ENCODE measurements at regions of chr10 and their contacts with region 1.

Region 1: GRCh38 chr10:63157845-63158624 is 24.9 kb downstream of the NRBF2 start:
- DNase-seq: peak; percentile 69
- H3K4me3 ChIP-seq: no peak overlapping the region
- H3K27ac ChIP-seq: no peak overlapping the region
- H3K4me1 ChIP-seq: no peaks in the 10 kb centered on the region
- H3K27me3 ChIP-seq: no peaks in the 10 kb centered on the region
- CTCF ChIP-seq: peak; percentile 51 to 78

Region 2: GRCh38 chr10:62492012-62492869 is 665.8 kb before region 1 on chr10:
- CTCF ChIA-PET with region 1: no interaction called
- dilution Hi-C with region 1: no loop called
- in situ Hi-C with region 1: no loop called
- intact Hi-C with region 1: loop called (anchors 5 kb)
- DNase-seq: peak; percentile 72
- H3K4me3 ChIP-seq: no peak overlapping the region
- H3K27ac ChIP-seq: peak overlapping the region; percentile 55
- H3K4me1 ChIP-seq: peaks cover 10% of the 10 kb centered on the region
- H3K27me3 ChIP-seq: no peaks in the 10 kb centered on the region
- CTCF ChIP-seq: peak; percentile 80 to 87

Region 3: DNA sequence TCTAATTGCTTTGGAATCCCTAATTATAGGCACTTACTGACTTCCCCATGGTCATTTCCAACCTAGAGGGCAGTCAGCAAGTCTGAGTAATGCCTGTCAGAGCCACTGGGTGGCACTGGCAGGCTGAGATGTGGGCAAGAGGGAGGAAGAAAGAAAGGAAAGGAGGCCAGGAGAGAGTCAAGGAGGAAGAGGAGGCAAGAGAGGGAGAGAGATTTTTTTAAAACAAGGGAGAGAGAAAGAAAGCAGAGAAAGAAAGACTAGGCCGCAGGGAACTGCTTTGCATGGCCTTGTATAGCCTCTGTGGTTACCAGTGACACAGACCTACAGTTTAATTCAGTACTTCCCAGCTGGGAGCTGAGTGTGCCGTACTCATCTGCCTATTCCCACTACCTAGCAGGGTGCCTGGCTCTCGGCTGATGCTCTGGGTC is 563.9 kb before region 1 on chr10:
- CTCF ChIA-PET with region 1: no interaction called
- dilution Hi-C with region 1: no loop called
- in situ Hi-C with region 1: no loop called
- intact Hi-C with region 1: loop called (anchors 1 kb)
- DNase-seq: peak; percentile 51
- H3K4me3 ChIP-seq: no peak overlapping the region
- H3K27ac ChIP-seq: no peak overlapping the region
- H3K4me1 ChIP-seq: peaks cover 4% of the 10 kb centered on the region
- H3K27me3 ChIP-seq: no peaks in the 10 kb centered on the region
- CTCF ChIP-seq: peak; percentile 92 to 96

Region 4: GRCh38 chr10:62816331-62817120 is 341.5 kb before region 1 on chr10 and contains the start of gene EGR2:
- CTCF ChIA-PET with region 1: no interaction called
- dilution Hi-C with region 1: no loop called
- in situ Hi-C with region 1: no loop called
- intact Hi-C with region 1: loop called (anchors 2 kb)
- DNase-seq: peak; percentile 93
- H3K4me3 ChIP-seq: peak within 1 kb of the TSS; percentile 63 to 73 (median 66)
- H3K27ac ChIP-seq: peak within 1 kb of the TSS; percentile 70
- H3K4me1 ChIP-seq: peaks cover 35% of the 10 kb centered on the region
- H3K27me3 ChIP-seq: peaks cover 8% of the 10 kb centered on the region
- CTCF ChIP-seq: no peak
- total RNA-seq, gene EGR2: 0.64 to 1.2 TPM

Region 5: DNA sequence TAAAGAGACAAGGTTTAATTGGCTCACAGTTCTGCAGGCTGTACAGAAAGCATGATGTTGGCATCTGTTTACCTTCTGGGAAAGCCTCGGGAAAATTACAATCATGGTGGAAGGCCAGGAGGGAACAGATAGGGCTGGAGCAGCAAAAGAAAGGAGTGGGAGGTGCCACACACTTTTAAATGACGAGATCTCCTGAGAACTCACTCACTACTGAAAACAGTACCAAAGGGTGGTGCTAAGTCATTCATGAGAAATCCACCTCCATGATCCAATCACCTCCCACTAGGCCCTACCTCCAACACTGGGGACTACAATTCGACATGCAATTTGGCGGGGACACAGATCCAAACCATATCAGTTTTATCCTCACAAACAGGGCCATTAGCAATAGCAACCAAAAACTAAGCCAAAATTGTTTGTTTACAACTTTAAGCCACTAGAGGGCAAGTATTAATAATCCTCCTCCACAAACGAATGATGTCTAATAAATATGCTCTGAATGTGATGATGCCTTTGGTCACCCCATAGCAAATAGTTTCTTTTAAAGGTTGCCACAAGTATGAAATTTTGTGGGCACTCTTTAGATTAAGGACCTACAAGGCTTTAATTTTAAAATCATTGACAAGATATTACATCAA is 154.1 kb before region 1 on chr10:
- CTCF ChIA-PET with region 1: no interaction called
- dilution Hi-C with region 1: no loop called
- in situ Hi-C with region 1: no loop called
- intact Hi-C with region 1: loop called (anchors 2 kb)
- DNase-seq: no peak
- H3K4me3 ChIP-seq: no peak overlapping the region
- H3K27ac ChIP-seq: no peak overlapping the region
- H3K4me1 ChIP-seq: peaks cover 14% of the 10 kb centered on the region
- H3K27me3 ChIP-seq: no peaks in the 10 kb centered on the region
- CTCF ChIP-seq: peak; percentile 30 to 40

Region 6: DNA sequence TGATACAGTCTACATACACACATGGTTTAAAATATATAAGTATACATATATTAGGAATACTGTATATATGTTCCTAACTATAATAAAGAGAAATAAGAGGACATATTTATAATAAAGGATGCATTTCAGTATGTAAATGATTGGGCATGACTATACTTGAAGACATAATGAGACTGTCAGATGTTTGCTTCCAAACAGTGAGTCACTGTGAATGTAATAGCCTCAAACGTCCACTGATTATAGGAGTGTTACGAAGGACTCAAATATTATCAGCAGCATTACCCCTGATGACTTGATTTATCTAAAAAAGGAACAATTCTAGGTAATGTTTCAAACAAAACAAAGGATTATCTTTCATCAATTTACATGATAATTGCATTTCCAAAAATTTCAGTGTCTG is 64.8 kb before region 1 on chr10:
- CTCF ChIA-PET with region 1: no interaction called
- dilution Hi-C with region 1: loop called (anchors 5 kb)
- in situ Hi-C with region 1: no loop called
- intact Hi-C with region 1: no loop called
- DNase-seq: peak; percentile 67
- H3K4me3 ChIP-seq: no peak overlapping the region
- H3K27ac ChIP-seq: no peak overlapping the region
- H3K4me1 ChIP-seq: peaks cover 7% of the 10 kb centered on the region
- H3K27me3 ChIP-seq: no peaks in the 10 kb centered on the region
- CTCF ChIP-seq: peak in 1 of 2 donors; percentile 26